Endothelial cell of umbilical vein (primary cell): ENCODE measurements at regions of chr7 and their contacts with region 1.

Region 1: DNA sequence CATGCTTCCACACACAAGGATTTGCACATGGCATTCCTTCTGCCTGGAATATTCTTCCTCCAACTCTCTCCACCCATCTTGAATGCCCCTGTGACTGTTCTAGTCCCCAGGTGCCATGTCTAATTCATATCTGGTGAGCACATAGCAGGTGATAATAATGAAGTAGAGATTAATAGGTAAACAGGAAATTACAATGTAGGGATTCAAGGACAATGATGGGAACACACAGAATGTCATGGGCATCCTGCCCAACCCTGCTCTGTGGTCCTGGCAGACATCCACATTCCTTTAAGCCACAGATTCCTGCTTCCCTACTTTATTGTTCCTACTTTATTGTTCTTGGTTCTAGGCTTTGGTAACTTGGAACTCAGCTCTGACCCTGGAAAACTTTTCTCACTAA is 115.8 kb downstream of the THSD7A start:
- DNase-seq: peak; percentile 98
- H3K4me3 ChIP-seq: no peak overlapping the region
- H3K27ac ChIP-seq: peak overlapping the region; percentile 89
- H3K4me1 ChIP-seq: peaks cover 42% of the 10 kb centered on the region
- H3K27me3 ChIP-seq: no peaks in the 10 kb centered on the region
- CTCF ChIP-seq: no peak
- POLR2A ChIP-seq: no peak

Region 2: DNA sequence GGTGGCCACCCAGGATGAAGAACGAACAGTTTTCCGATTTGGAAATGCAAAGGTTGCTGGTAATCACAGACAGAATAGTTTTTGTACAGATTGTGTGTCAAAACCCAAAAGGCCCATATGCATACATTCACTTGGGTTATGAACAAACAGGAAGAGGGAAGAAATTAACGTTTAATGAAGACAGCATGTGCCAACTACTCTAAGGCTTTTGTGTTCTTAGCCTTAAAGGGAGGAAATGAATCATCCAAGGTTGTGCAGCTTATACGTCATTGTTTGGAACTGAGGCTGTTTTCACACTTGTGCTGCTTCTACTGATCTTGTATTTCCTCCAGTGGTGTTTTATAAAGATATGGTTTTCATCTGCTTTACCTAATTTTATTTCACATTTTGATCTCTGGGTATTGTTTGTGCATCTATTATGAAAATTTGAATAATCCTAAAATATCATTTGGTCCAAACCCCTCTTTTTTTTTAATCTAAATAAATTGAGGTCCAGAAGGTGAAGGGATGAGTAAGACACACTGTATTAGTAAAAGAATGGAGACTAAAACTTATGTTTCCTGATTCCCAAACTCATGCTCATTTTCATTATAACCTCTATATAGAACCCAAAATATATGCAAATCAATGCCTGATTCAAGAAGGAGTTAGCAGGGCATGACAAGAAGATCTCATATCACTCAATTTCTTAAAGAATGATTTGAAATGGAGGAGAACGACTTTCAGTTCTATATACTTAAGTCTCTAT is 257.3 kb before region 1 on chr7:
- CTCF ChIA-PET with region 1: no interaction called
- POLR2A ChIA-PET with region 1: no interaction called
- dilution Hi-C with region 1: no loop called
- intact Hi-C with region 1: loop called (anchors 1 kb)
- DNase-seq: peak; percentile 96
- H3K4me3 ChIP-seq: peak overlapping the region in 1 of 3 experiments; percentile 10
- H3K27ac ChIP-seq: peak overlapping the region; percentile 93
- H3K4me1 ChIP-seq: peaks cover 23% of the 10 kb centered on the region
- H3K27me3 ChIP-seq: no peaks in the 10 kb centered on the region
- CTCF ChIP-seq: no peak
- POLR2A ChIP-seq: peak; percentile 51

Region 3: DNA sequence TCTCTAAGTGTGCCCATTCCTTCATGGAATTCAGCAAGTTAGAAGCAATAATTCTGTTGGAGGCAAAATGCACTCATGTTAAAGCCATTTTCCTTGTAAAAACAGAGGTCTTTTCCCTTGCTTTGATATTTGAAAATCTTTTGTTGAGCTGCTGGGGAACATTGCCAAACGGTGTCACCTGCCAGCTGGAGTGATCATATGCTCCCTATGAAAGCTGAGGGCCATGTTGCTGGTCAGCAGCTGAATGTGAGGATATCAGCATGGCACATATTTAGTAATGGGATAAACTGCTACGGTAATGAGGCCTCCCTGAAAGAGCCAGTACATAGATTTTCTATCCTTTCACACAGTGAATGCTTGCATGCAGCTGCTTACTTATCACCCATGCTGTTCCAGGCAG is 108.5 kb before region 1 on chr7:
- CTCF ChIA-PET with region 1: no interaction called
- POLR2A ChIA-PET with region 1: no interaction called
- dilution Hi-C with region 1: no loop called
- intact Hi-C with region 1: loop called (anchors 1 kb)
- DNase-seq: peak; percentile 89
- H3K4me3 ChIP-seq: no peak overlapping the region
- H3K27ac ChIP-seq: no peak overlapping the region
- H3K4me1 ChIP-seq: peaks cover 14% of the 10 kb centered on the region
- H3K27me3 ChIP-seq: no peaks in the 10 kb centered on the region
- CTCF ChIP-seq: no peak
- POLR2A ChIP-seq: no peak

Region 4: DNA sequence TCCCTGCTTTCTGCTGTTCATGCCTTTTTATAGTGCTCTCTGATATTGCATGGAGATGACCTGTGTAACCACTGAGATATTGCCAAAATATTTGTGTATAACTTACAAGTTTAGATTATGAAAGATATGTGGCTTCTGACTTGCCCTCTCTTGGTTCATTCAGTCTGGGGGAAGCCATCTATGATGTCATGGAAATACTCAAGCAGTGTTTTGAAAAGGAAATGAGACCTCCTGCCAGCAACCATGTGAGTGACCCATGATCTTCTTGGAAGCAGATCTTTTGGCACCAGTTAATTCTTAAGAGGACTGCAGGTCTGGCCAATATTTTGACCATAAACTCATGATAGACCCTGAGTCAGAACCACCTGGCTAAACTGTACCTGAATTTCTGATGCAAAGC is 67.2 kb before region 1 on chr7:
- CTCF ChIA-PET with region 1: no interaction called
- POLR2A ChIA-PET with region 1: no interaction called
- dilution Hi-C with region 1: no loop called
- intact Hi-C with region 1: loop called (anchors 1 kb)
- DNase-seq: peak; percentile 95
- H3K4me3 ChIP-seq: no peak overlapping the region
- H3K27ac ChIP-seq: peak overlapping the region; percentile 46
- H3K4me1 ChIP-seq: peaks cover 22% of the 10 kb centered on the region
- H3K27me3 ChIP-seq: no peaks in the 10 kb centered on the region
- CTCF ChIP-seq: no peak
- POLR2A ChIP-seq: no peak

Region 5: DNA sequence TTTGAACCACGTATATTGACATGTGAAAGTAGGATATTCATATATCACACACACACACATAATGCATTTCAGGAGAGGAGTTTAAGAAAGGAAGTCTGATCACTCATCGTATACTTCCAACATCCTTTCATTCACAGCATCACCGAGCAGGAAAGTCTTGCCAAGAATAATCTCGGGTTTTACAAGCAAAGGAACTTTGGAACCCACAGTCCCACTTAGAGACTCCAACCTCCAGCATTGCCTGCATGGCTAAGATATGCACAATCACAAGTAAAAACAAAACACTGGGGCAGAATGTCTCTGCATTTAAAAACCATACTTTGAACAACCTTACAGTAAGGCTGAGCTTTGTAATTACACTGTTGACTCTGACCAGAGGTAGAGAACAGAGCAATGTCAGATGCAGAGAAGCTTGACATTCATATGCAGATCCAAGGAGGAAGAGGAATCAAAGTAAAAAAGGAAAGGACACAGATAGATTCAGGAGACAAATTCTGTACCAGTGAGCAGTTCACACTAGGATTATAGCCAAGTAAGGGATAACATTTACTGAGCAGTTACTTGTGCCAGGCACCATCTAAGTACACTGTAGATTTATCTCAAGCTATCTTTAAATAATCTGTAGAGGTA is 101.0 kb after region 1 on chr7:
- CTCF ChIA-PET with region 1: no interaction called
- POLR2A ChIA-PET with region 1: no interaction called
- dilution Hi-C with region 1: no loop called
- intact Hi-C with region 1: loop called (anchors 5 kb)
- DNase-seq: peak; percentile 85
- H3K4me3 ChIP-seq: no peak overlapping the region
- H3K27ac ChIP-seq: no peak overlapping the region
- H3K4me1 ChIP-seq: peaks cover 15% of the 10 kb centered on the region
- H3K27me3 ChIP-seq: no peaks in the 10 kb centered on the region
- CTCF ChIP-seq: no peak
- POLR2A ChIP-seq: no peak